ENCODE measurements at regions of chr11 and their contacts with region 1.

Region 1: GRCh38 chr11:82900277-82901164 is at the start of gene PRCP:
- DNase-seq: peak; percentile 98
- ATAC-seq: peak; percentile 80
- H3K4me3 Mint-ChIP-seq: peak within 1 kb of the TSS; percentile 79
- H3K27ac Mint-ChIP-seq: peak within 1 kb of the TSS; percentile 98
- H3K4me1 Mint-ChIP-seq: peaks cover 56% of the 10 kb centered on the region
- H3K27me3 Mint-ChIP-seq: no peaks in the 10 kb centered on the region
- CTCF ChIP-seq: no peak
- total RNA-seq, gene PRCP: 21.8 to 29.9 TPM

Region 2: GRCh38 chr11:82733444-82734119 is 166.9 kb before region 1 on chr11 and contains the start of gene FAM181B:
- CTCF ChIA-PET with region 1: no interaction called
- POLR2A ChIA-PET with region 1: no interaction called
- intact Hi-C with region 1: no loop called
- DNase-seq: peak; percentile 44
- ATAC-seq: peak; percentile 76
- H3K4me3 Mint-ChIP-seq: peak within 1 kb of the TSS; percentile 52
- H3K27ac Mint-ChIP-seq: no peak within 1 kb of the TSS
- H3K4me1 Mint-ChIP-seq: peaks cover 4% of the 10 kb centered on the region
- H3K27me3 Mint-ChIP-seq: peaks cover 54% of the 10 kb centered on the region
- CTCF ChIP-seq: no peak
- total RNA-seq, gene FAM181B: not detected

Region 3: DNA sequence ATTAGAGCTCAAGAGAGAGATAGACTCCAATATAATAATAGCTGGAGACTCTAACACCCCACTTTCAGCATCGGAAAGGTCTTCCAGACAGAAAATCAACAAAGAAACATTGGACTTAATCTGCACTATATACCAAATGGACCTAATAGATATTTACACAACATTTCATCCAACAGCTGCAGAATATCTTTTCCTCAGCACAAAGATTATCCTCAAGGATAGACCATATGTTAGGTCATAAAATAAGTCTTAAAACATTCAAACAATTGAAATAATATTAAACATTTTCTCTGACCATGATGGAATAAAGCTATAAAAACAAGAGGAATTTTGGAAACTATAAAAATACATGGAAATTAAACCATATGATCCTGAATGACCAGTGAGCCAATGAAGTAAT is 121.7 kb before region 1 on chr11:
- CTCF ChIA-PET with region 1: no interaction called
- POLR2A ChIA-PET with region 1: no interaction called
- intact Hi-C with region 1: no loop called
- DNase-seq: no peak
- ATAC-seq: no peak
- H3K4me3 Mint-ChIP-seq: no peak overlapping the region
- H3K27ac Mint-ChIP-seq: no peak overlapping the region
- H3K4me1 Mint-ChIP-seq: no peaks in the 10 kb centered on the region
- H3K27me3 Mint-ChIP-seq: peaks cover 9% of the 10 kb centered on the region
- CTCF ChIP-seq: no peak

Region 4: DNA sequence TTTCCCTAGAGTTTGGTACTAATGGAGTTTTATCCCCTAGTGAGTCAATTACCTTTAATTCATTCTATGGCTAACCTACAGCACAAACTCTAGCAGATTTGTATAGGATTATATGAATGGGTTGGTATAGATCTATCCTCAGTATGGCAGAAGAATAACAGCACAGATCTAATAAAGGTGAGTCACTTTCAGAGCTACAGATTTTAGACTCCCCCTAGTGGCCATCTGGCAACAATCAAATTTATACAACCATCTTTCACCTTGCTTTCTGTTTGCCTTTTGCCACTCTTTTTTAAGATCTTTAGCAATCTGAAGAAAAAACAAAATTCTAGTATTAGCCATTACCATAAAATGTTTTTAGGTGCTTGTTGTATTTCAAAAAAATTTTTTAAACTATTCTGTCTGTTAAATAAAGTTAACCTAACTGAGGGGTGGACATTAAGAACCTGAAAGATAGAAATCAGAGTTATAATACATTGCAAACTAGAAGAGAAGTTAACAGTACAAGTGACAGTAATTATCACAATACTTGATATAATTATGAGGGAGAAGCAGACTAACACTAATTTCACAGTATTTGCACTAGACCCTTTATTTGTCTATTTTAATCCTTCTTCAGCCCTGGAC is 26.8 kb after region 1 on chr11:
- CTCF ChIA-PET with region 1: interaction called, 25 read pairs
- POLR2A ChIA-PET with region 1: interaction called, 3 read pairs
- intact Hi-C with region 1: no loop called
- DNase-seq: peak; percentile 27
- ATAC-seq: peak; percentile 82
- H3K4me3 Mint-ChIP-seq: no peak overlapping the region
- H3K27ac Mint-ChIP-seq: peak overlapping the region; percentile 43
- H3K4me1 Mint-ChIP-seq: peaks cover 37% of the 10 kb centered on the region
- H3K27me3 Mint-ChIP-seq: no peaks in the 10 kb centered on the region
- CTCF ChIP-seq: peak; percentile 86

Region 5: GRCh38 chr11:83193315-83194280 is 293.1 kb after region 1 on chr11 and contains the start of gene ANKRD42:
- CTCF ChIA-PET with region 1: no interaction called
- POLR2A ChIA-PET with region 1: interaction called, 15 read pairs
- intact Hi-C with region 1: loop called (anchors 5 kb)
- DNase-seq: peak; percentile 92
- ATAC-seq: peak; percentile 77
- H3K4me3 Mint-ChIP-seq: peak within 1 kb of the TSS; percentile 98
- H3K27ac Mint-ChIP-seq: peak within 1 kb of the TSS; percentile 99
- H3K4me1 Mint-ChIP-seq: peaks cover 36% of the 10 kb centered on the region
- H3K27me3 Mint-ChIP-seq: no peaks in the 10 kb centered on the region
- CTCF ChIP-seq: no peak
- total RNA-seq, gene ANKRD42: 3.8 to 4.7 TPM

Measured in activated CD8-positive, alpha-beta T cell treated with anti-CD3 and anti-CD28 coated beads for 36 hours (primary cell).